Caco-2 (cell line): ENCODE measurements at regions of chr4 and their contacts with region 1.

Region 1: DNA sequence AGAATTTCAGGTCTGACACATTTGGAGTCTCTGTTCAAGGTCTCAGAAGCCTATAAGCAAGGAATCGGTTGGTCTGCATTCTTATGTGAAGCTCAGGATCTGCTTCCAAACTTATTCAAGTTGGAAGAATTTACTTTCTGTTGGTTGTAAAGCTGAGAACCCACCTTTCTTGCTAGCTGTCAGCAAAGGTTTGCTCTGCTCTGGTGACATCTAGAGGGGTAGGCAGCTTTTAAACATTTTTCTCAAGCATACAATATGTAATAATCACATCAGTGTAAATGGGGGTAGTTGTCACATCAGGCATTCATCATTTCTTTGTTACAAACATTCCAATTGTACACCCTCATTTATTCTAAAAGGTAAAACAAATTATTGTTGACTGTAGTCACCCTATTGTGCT is 935.2 kb downstream of the TRAM1L1 start:
- DNase-seq: peak in 1 of 2 experiments; percentile 34
- H3K4me3 ChIP-seq: no peak overlapping the region
- H3K4me3 Mint-ChIP-seq: no peak overlapping the region
- H3K27ac Mint-ChIP-seq: no peak overlapping the region
- H3K4me1 ChIP-seq: no peaks in the 10 kb centered on the region
- H3K4me1 Mint-ChIP-seq: no peaks in the 10 kb centered on the region
- H3K27me3 ChIP-seq: no peaks in the 10 kb centered on the region
- H3K27me3 Mint-ChIP-seq: no peaks in the 10 kb centered on the region
- CTCF ChIP-seq: peak; percentile 19 to 30

Region 2: DNA sequence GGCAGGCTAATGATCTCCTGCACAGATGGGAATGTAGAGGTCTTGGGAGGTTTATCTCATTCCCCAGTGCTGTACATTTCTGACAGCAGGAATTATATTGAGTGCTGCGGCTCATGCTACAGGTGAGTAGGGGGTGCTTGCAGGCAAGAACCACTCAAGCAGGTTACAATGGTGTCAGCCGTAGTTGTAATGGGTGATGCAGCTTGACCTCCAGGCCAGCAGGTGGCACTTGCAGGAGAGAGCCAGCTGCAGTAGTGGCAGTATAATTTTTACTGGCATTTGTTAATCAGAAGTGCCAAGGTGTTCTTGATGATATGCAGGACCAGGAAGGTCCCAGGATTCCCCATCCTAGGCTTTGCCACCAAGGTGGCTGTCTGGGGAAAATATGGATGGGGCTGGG is 277.1 kb before region 1 on chr4:
- CTCF ChIA-PET with region 1: no interaction called
- POLR2A ChIA-PET with region 1: no interaction called
- intact Hi-C with region 1: loop called (anchors 1 kb)
- DNase-seq: peak in 1 of 2 experiments; percentile 8
- H3K4me3 ChIP-seq: no peak overlapping the region
- H3K4me3 Mint-ChIP-seq: no peak overlapping the region
- H3K27ac Mint-ChIP-seq: no peak overlapping the region
- H3K4me1 ChIP-seq: no peaks in the 10 kb centered on the region
- H3K4me1 Mint-ChIP-seq: no peaks in the 10 kb centered on the region
- H3K27me3 ChIP-seq: no peaks in the 10 kb centered on the region
- H3K27me3 Mint-ChIP-seq: peaks cover 3% of the 10 kb centered on the region
- CTCF ChIP-seq: peak; percentile 14 to 34

Region 3: GRCh38 chr4:115950806-115951205 is 199.3 kb before region 1 on chr4:
- CTCF ChIA-PET with region 1: no interaction called
- POLR2A ChIA-PET with region 1: no interaction called
- intact Hi-C with region 1: no loop called
- DNase-seq: no peak
- H3K4me3 ChIP-seq: no peak overlapping the region
- H3K4me3 Mint-ChIP-seq: no peak overlapping the region
- H3K27ac Mint-ChIP-seq: no peak overlapping the region
- H3K4me1 ChIP-seq: no peaks in the 10 kb centered on the region
- H3K4me1 Mint-ChIP-seq: no peaks in the 10 kb centered on the region
- H3K27me3 ChIP-seq: no peaks in the 10 kb centered on the region
- H3K27me3 Mint-ChIP-seq: no peaks in the 10 kb centered on the region
- CTCF ChIP-seq: no peak

Region 4: DNA sequence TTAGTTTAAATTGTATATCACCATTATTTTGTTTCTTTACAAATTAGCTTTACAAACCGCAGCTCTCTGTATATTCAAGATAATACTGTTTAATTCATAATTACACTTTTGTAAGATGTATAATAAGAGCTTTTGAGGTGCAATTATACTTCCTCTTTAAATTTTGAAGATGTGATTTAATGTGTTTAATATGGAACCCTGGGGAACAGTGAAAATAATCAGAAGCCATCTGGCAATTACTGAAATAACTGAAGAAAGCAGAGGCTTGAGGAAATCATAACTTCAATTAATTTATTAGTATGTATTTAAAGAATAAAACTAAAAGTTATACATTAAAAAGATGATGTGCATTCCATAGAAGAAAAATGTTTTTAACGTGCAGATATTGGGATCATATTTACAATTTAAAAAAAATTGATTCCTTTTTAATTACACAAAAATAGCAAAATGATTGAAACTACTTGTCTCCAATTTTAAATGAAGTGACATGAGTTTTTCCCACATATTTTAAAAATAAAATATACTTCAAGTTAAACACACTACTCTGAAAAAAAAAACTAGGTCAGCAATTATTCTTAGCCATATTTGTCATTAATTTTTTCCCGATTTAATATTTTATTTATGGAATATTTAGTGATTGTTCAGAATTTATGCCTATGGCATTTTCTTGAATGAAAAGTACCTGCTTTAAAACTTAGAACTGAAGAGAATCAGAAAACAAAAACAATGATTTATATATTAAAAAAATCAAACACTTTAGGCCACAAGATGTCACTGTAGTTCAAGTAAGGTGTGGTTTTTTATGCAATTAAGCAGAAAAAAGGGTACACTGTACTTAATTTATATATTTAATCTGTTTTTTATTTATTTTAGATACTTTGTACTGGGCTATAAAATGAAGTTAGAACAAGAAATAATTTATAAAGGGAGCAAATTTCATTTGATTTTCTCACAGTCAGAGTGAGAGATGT is 94.0 kb before region 1 on chr4:
- CTCF ChIA-PET with region 1: interaction called, 3 read pairs
- POLR2A ChIA-PET with region 1: no interaction called
- intact Hi-C with region 1: loop called (anchors 1 kb)
- DNase-seq: no peak
- H3K4me3 ChIP-seq: no peak overlapping the region
- H3K4me3 Mint-ChIP-seq: no peak overlapping the region
- H3K27ac Mint-ChIP-seq: no peak overlapping the region
- H3K4me1 ChIP-seq: no peaks in the 10 kb centered on the region
- H3K4me1 Mint-ChIP-seq: no peaks in the 10 kb centered on the region
- H3K27me3 ChIP-seq: no peaks in the 10 kb centered on the region
- H3K27me3 Mint-ChIP-seq: no peaks in the 10 kb centered on the region
- CTCF ChIP-seq: peak in 1 of 2 experiments; percentile 52

Region 5: GRCh38 chr4:116108606-116109005 is 41.5 kb before region 1 on chr4:
- CTCF ChIA-PET with region 1: no interaction called
- POLR2A ChIA-PET with region 1: no interaction called
- intact Hi-C with region 1: loop called (anchors 2 kb)
- DNase-seq: peak; percentile 71 to 75
- H3K4me3 ChIP-seq: no peak overlapping the region
- H3K4me3 Mint-ChIP-seq: peak overlapping the region; percentile 62
- H3K27ac Mint-ChIP-seq: peak overlapping the region; percentile 85
- H3K4me1 ChIP-seq: peaks cover 30% of the 10 kb centered on the region
- H3K4me1 Mint-ChIP-seq: peaks cover 7% of the 10 kb centered on the region
- H3K27me3 ChIP-seq: no peaks in the 10 kb centered on the region
- H3K27me3 Mint-ChIP-seq: no peaks in the 10 kb centered on the region
- CTCF ChIP-seq: no peak